ENCODE measurements at regions of chr4 and their contacts with region 1.

Region 1: DNA sequence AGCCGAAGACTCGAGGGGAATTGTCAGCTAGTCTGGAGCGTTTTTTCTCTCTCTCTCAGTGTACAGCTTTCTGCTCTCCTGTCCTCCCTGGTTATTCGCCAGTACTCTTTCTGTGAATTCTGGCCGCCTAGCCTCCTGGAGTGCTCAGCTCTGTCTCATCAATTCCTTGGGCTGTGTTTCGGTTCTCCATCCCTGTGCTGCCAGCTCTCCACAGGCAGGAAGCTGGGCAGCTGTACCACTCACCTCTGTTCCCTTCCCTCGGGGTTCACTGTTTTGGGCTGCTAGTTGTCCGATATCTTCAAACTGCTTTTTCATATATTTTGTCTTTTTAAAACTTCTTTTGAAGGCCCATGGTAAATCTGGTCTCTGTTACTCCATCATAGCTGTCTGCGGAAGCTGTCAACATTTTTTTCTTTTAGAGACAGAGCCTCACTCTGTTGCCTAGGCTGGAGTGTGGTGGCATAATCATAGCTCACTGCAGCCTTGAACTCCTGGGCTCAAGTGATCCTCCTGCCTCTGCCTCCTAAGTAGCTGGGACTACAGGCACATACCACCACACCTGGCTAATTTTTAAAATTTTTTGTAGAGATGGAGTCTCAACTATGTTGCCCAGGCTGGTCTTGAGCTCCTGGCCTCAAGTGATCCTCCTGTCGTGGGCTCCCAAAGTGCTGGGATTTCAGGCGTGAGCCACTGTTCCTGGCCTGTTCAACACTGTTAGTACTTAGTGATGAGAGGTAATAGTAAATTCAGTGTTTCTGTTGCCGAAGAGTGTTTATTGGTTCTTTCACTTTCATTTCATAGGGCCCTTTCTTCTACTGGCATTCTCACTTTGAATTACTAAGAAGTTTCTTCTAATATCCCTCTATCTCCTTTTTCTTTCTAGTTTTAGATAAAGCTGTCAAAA is 18.6 kb downstream of the ZCCHC4 start:
- DNase-seq: no peak
- H3K4me3 Mint-ChIP-seq: peak overlapping the region; percentile 72
- H3K27ac Mint-ChIP-seq: peak overlapping the region; percentile 89
- H3K4me1 Mint-ChIP-seq: peaks cover 16% of the 10 kb centered on the region
- H3K27me3 Mint-ChIP-seq: no peaks in the 10 kb centered on the region

Region 2: GRCh38 chr4:25253071-25253445 is 78.1 kb before region 1 on chr4:
- intact Hi-C with region 1: no loop called
- DNase-seq: no peak
- H3K4me3 Mint-ChIP-seq: no peak overlapping the region
- H3K27ac Mint-ChIP-seq: no peak overlapping the region
- H3K4me1 Mint-ChIP-seq: peaks cover 20% of the 10 kb centered on the region
- H3K27me3 Mint-ChIP-seq: no peaks in the 10 kb centered on the region

Region 3: GRCh38 chr4:25376754-25377571 is 45.8 kb after region 1 on chr4 and contains the start of gene ANAPC4:
- intact Hi-C with region 1: loop called (anchors 5 kb)
- DNase-seq: peak; percentile 93
- H3K4me3 Mint-ChIP-seq: no peak within 1 kb of the TSS
- H3K27ac Mint-ChIP-seq: peak within 1 kb of the TSS; percentile 89
- H3K4me1 Mint-ChIP-seq: peaks cover 4% of the 10 kb centered on the region
- H3K27me3 Mint-ChIP-seq: no peaks in the 10 kb centered on the region
- total RNA-seq, gene ANAPC4: 39.5 and 40.9 TPM in 2 replicates